Breast epithelium (tissue), 4 donors: ENCODE measurements at regions of chr3 and their contacts with region 1.

Region 1: DNA sequence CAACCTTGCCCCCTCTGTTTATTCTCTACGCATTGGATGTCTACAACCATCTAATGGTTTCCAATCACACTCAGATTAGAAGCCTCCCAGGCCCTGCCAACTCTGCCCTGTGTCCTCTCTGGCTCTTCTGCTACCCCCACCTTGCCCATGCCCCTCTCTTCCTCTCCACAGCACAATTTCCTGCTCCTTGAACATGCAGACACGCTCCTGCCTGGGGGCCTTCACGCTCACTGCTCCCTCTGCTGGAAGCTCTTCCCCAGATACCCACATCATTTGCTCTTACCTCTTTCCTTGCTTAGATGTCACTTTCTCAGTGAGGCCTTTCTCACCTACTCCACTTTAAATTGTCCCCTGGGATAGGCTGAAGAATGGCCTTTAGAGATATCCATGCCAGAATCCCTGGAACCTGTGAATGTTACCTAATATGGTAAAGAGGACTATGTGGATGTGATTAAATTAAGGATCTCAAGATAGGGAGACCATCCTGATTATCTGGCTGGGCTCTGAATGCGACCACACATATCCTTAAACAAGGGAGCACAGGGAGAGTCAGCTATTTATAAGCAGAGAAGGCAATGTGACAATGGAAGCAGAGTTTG is 9.9 kb downstream of the KY start:
- DNase-seq: no peak
- H3K4me3 ChIP-seq: no peak overlapping the region
- H3K27ac ChIP-seq: no peak overlapping the region
- H3K4me1 ChIP-seq: no peaks in the 10 kb centered on the region
- H3K27me3 ChIP-seq: no peaks in the 10 kb centered on the region
- CTCF ChIP-seq: no peak
- POLR2A ChIP-seq: no peak

Region 2: GRCh38 chr3:134274571-134274970 is 366.4 kb before region 1 on chr3:
- intact Hi-C with region 1: loop called (anchors 5 kb)
- DNase-seq: no peak
- H3K4me3 ChIP-seq: no peak overlapping the region
- H3K27ac ChIP-seq: no peak overlapping the region
- H3K4me1 ChIP-seq: peaks cover 0 to 4% of the 10 kb centered on the region in 2 donors
- H3K27me3 ChIP-seq: no peaks in the 10 kb centered on the region
- CTCF ChIP-seq: no peak
- POLR2A ChIP-seq: no peak

Region 3: DNA sequence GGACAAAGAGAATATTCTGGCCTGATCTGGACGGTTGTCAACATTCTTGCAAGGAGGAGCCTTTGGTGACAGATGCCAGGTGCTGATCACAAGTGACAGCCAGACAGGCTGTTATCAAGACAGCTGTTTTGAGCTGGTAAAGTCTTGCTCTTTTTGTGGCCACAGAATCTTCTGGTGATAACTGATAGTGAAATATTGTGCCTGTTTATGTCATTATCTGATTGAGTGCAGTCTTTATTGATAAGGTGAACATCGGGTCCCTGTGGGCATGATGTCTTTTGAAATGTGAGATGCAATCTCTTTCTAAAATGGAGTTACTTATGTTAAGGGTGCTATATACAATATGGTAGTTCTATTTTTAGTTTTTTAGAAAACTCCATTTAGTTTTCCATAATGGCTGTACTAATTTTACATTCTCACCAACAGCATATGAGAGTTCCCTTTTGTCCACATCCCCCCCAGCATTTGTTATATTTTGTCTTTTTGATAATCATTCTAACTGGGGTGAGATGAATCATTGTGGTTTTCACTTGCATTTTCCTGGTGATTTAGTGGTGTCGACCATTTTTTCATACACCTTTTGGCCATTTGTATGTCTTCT is 144.4 kb before region 1 on chr3:
- intact Hi-C with region 1: no loop called
- DNase-seq: no peak
- H3K4me3 ChIP-seq: no peak overlapping the region
- H3K27ac ChIP-seq: no peak overlapping the region
- H3K4me1 ChIP-seq: no peaks in the 10 kb centered on the region
- H3K27me3 ChIP-seq: no peaks in the 10 kb centered on the region
- CTCF ChIP-seq: no peak
- POLR2A ChIP-seq: no peak